CD4-positive, alpha-beta T cell (primary cell): ENCODE measurements at regions of chrX and their contacts with region 1.

Region 1: GRCh38 chrX:10119399-10119990 is 37.3 kb upstream of the CLCN4 start:
- DNase-seq: peak; percentile 43 to 88 (median 66)
- ATAC-seq: peak; percentile 80
- H3K4me3 ChIP-seq: no peak overlapping the region
- H3K4me3 Mint-ChIP-seq: no peak overlapping the region
- H3K27ac ChIP-seq: no peak overlapping the region
- H3K27ac Mint-ChIP-seq: peak overlapping the region; percentile 5
- H3K4me1 ChIP-seq: peaks cover 16% of the 10 kb centered on the region
- H3K4me1 Mint-ChIP-seq: peaks cover 5% of the 10 kb centered on the region
- H3K27me3 ChIP-seq: no peaks in the 10 kb centered on the region
- H3K27me3 Mint-ChIP-seq: no peaks in the 10 kb centered on the region
- CTCF ChIP-seq: peak; percentile 100

Region 2: GRCh38 chrX:8748855-8749254 is 1370.6 kb before region 1 on chrX:
- CTCF ChIA-PET with region 1: no interaction called
- POLR2A ChIA-PET with region 1: no interaction called
- intact Hi-C with region 1: loop called in 1 of 2 experiments (anchors 5 kb)
- DNase-seq: peak in 3 of 14 experiments; percentile 27 to 39 (median 29)
- ATAC-seq: no peak
- H3K4me3 ChIP-seq: no peak overlapping the region
- H3K4me3 Mint-ChIP-seq: no peak overlapping the region
- H3K27ac ChIP-seq: no peak overlapping the region
- H3K27ac Mint-ChIP-seq: no peak overlapping the region
- H3K4me1 ChIP-seq: no peaks in the 10 kb centered on the region
- H3K4me1 Mint-ChIP-seq: no peaks in the 10 kb centered on the region
- H3K27me3 ChIP-seq: no peaks in the 10 kb centered on the region
- H3K27me3 Mint-ChIP-seq: peaks cover 8% of the 10 kb centered on the region
- CTCF ChIP-seq: peak; percentile 33

Region 3: GRCh38 chrX:9873952-9874351 is 245.5 kb before region 1 on chrX:
- CTCF ChIA-PET with region 1: no interaction called
- POLR2A ChIA-PET with region 1: no interaction called
- intact Hi-C with region 1: loop called (anchors 1 to 2 kb)
- DNase-seq: peak; percentile 4 to 61 (median 24)
- ATAC-seq: peak; percentile 71
- H3K4me3 ChIP-seq: no peak overlapping the region
- H3K4me3 Mint-ChIP-seq: no peak overlapping the region
- H3K27ac ChIP-seq: no peak overlapping the region
- H3K27ac Mint-ChIP-seq: no peak overlapping the region
- H3K4me1 ChIP-seq: no peaks in the 10 kb centered on the region
- H3K4me1 Mint-ChIP-seq: peaks cover 23% of the 10 kb centered on the region
- H3K27me3 ChIP-seq: no peaks in the 10 kb centered on the region
- H3K27me3 Mint-ChIP-seq: peaks cover 17% of the 10 kb centered on the region
- CTCF ChIP-seq: peak; percentile 31

Region 4: GRCh38 chrX:9995855-9996339 is 123.6 kb before region 1 on chrX:
- CTCF ChIA-PET with region 1: interaction called, 32 read pairs
- POLR2A ChIA-PET with region 1: no interaction called
- intact Hi-C with region 1: loop called (anchors 1 kb)
- DNase-seq: peak; percentile 57 to 86 (median 72)
- ATAC-seq: peak; percentile 86
- H3K4me3 ChIP-seq: no peak overlapping the region
- H3K4me3 Mint-ChIP-seq: no peak overlapping the region
- H3K27ac ChIP-seq: no peak overlapping the region
- H3K27ac Mint-ChIP-seq: no peak overlapping the region
- H3K4me1 ChIP-seq: peaks cover 3% of the 10 kb centered on the region
- H3K4me1 Mint-ChIP-seq: no peaks in the 10 kb centered on the region
- H3K27me3 ChIP-seq: no peaks in the 10 kb centered on the region
- H3K27me3 Mint-ChIP-seq: no peaks in the 10 kb centered on the region
- CTCF ChIP-seq: peak; percentile 91

Region 5: GRCh38 chrX:10014462-10015356 is 104.8 kb before region 1 on chrX:
- CTCF ChIA-PET with region 1: interaction called, 3 read pairs
- POLR2A ChIA-PET with region 1: interaction called, 3 read pairs
- intact Hi-C with region 1: loop called in 1 of 2 experiments (anchors 5 kb)
- DNase-seq: peak; percentile 55 to 90 (median 68)
- ATAC-seq: peak; percentile 90
- H3K4me3 ChIP-seq: peak overlapping the region; percentile 64
- H3K4me3 Mint-ChIP-seq: peak overlapping the region; percentile 58
- H3K27ac ChIP-seq: peak overlapping the region in 1 of 2 donors; percentile 13
- H3K27ac Mint-ChIP-seq: no peak overlapping the region
- H3K4me1 ChIP-seq: peaks cover 39% of the 10 kb centered on the region
- H3K4me1 Mint-ChIP-seq: peaks cover 33% of the 10 kb centered on the region
- H3K27me3 ChIP-seq: no peaks in the 10 kb centered on the region
- H3K27me3 Mint-ChIP-seq: no peaks in the 10 kb centered on the region
- CTCF ChIP-seq: no peak

Region 6: DNA sequence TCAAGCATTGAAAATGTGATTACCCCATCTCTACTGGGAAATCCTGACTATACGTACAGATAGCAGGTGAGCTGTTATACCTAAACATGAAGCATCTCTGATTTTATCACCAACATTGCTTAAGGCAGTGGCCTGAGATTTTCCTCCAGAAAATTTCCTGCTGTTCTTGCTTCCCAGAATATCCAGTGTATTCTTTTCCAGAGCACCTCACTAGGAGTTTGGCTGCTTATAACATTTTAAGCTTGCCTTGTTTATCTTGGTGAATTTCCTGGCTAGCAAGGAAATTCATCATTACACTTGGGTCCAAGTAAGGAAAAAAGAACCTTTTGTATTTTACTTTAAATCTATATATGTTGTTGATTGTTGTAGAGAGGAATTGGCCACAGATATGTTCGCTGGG is 35.7 kb before region 1 on chrX:
- CTCF ChIA-PET with region 1: interaction called, 14 read pairs
- POLR2A ChIA-PET with region 1: no interaction called
- intact Hi-C with region 1: loop called in 1 of 2 experiments (anchors 5 kb)
- DNase-seq: no peak
- ATAC-seq: no peak
- H3K4me3 ChIP-seq: no peak overlapping the region
- H3K4me3 Mint-ChIP-seq: no peak overlapping the region
- H3K27ac ChIP-seq: peak overlapping the region; percentile 29 to 70
- H3K27ac Mint-ChIP-seq: peak overlapping the region; percentile 86
- H3K4me1 ChIP-seq: peaks cover 42% of the 10 kb centered on the region
- H3K4me1 Mint-ChIP-seq: peaks cover 36% of the 10 kb centered on the region
- H3K27me3 ChIP-seq: no peaks in the 10 kb centered on the region
- H3K27me3 Mint-ChIP-seq: no peaks in the 10 kb centered on the region
- CTCF ChIP-seq: no peak